ENCODE measurements at regions of chr3 and their contacts with region 1.

Region 1: DNA sequence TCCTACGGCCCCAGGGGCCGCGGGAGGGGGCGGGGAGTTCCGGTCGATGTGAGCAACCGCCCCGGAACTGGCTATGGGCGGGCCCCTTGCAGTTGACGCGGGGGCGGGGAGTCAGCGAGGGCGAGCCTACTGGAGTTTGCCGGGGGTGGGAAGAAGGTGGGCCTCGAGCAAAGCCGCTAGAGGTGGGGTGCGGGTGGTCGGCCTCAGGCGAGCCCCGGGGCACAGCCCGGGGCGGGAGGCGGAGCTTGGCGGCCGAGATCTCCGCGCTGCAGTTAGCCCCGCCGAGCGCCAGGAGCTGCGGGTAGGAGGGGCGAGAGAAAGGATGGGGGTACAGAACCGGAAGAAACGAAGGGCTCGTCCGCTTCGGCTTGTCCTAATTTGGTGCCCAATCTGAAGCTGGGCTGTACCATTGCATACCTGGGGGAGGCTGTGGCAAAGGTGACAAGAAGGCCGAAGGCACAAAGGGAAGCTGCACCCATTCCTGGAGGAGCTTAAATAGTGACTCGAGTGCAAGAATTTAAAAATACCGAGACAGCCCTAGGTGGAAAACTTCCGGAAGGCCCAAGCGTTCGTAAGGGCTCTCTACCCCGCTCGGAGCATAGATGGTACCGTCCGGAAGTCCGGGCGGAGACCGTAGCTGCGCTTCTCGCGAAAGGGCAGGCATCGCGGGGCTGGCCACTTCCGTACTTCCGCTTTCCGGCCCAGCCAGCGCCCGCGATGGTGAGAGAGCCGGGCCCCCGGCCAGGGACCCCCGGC is at the starts of genes ARPC4 and TADA3:
- DNase-seq: peak; percentile 82 to 96 (median 88)
- ATAC-seq: peak; percentile 85
- H3K4me3 ChIP-seq: peak within 1 kb of the TSS; percentile 99
- H3K4me3 Mint-ChIP-seq: peak within 1 kb of the TSS; percentile 99
- H3K27ac ChIP-seq: peak within 1 kb of the TSS; percentile 95 to 98
- H3K27ac Mint-ChIP-seq: peak within 1 kb of the TSS; percentile 99
- H3K4me1 ChIP-seq: peaks cover 64% of the 10 kb centered on the region
- H3K4me1 Mint-ChIP-seq: peaks cover 76% of the 10 kb centered on the region
- H3K27me3 ChIP-seq: no peaks in the 10 kb centered on the region
- H3K27me3 Mint-ChIP-seq: no peaks in the 10 kb centered on the region
- CTCF ChIP-seq: no peak
- total RNA-seq, gene ARPC4: 88.7 to 91.3 TPM
- total RNA-seq, gene TADA3: 14.7 to 16.5 TPM

Region 2: GRCh38 chr3:9749645-9750555 is 42.7 kb before region 1 on chr3 and contains the start of gene OGG1:
- CTCF ChIA-PET with region 1: interaction called, 5 read pairs
- POLR2A ChIA-PET with region 1: interaction called, 41 read pairs
- intact Hi-C with region 1: loop called (anchors 1 kb)
- DNase-seq: peak; percentile 84 to 98 (median 91)
- ATAC-seq: peak; percentile 94
- H3K4me3 ChIP-seq: peak within 1 kb of the TSS; percentile 82
- H3K4me3 Mint-ChIP-seq: peak within 1 kb of the TSS; percentile 95
- H3K27ac ChIP-seq: peak within 1 kb of the TSS; percentile 69 to 74
- H3K27ac Mint-ChIP-seq: peak within 1 kb of the TSS; percentile 85
- H3K4me1 ChIP-seq: peaks cover 37% of the 10 kb centered on the region
- H3K4me1 Mint-ChIP-seq: peaks cover 48% of the 10 kb centered on the region
- H3K27me3 ChIP-seq: no peaks in the 10 kb centered on the region
- H3K27me3 Mint-ChIP-seq: no peaks in the 10 kb centered on the region
- CTCF ChIP-seq: no peak
- total RNA-seq, gene OGG1: 7.1 to 8.9 TPM

Region 3: DNA sequence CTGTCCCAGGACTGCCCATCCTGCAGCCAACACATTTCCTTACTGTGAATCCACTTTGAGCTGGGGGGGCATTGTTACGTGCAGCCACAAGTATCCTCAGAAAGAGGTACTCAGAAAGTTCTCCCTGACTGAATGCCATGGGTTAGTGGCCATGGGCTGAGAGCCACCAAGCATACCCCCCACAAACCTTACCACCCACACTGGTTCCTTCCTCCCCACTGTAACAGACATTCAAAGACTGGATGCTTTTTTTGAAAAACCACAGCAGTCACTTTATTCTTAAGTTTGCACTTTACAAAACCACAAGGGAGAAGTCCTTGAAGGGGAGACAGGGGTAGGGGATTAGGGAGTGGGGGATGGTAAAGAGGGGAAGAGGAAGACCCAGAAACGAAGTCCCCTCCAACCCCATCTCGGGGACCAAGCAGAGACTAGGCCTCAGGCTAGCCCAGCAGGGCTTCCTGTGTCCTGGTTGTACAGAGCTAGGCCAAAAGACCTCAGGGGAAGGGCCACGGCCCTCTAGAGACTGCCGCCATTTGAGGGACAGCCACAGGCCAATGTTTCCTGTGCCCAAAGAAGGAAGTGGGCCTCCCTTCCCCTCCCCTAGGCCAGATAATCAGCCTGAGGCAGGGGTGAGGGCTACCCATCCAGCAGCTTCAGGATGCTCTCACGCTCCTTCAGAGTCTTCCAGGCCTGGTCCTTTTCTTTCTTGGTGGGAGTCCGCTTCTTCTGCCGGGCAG is 12.7 kb before region 1 on chr3:
- CTCF ChIA-PET with region 1: no interaction called
- POLR2A ChIA-PET with region 1: interaction called, 26 read pairs
- intact Hi-C with region 1: no loop called
- DNase-seq: peak in 5 of 14 experiments; percentile 30 to 61 (median 38)
- ATAC-seq: peak; percentile 71
- H3K4me3 ChIP-seq: peak overlapping the region; percentile 6
- H3K4me3 Mint-ChIP-seq: peak overlapping the region; percentile 38
- H3K27ac ChIP-seq: peak overlapping the region; percentile 42 to 49
- H3K27ac Mint-ChIP-seq: peak overlapping the region; percentile 65
- H3K4me1 ChIP-seq: peaks cover 50% of the 10 kb centered on the region
- H3K4me1 Mint-ChIP-seq: peaks cover 53% of the 10 kb centered on the region
- H3K27me3 ChIP-seq: no peaks in the 10 kb centered on the region
- H3K27me3 Mint-ChIP-seq: no peaks in the 10 kb centered on the region
- CTCF ChIP-seq: no peak

Region 4: DNA sequence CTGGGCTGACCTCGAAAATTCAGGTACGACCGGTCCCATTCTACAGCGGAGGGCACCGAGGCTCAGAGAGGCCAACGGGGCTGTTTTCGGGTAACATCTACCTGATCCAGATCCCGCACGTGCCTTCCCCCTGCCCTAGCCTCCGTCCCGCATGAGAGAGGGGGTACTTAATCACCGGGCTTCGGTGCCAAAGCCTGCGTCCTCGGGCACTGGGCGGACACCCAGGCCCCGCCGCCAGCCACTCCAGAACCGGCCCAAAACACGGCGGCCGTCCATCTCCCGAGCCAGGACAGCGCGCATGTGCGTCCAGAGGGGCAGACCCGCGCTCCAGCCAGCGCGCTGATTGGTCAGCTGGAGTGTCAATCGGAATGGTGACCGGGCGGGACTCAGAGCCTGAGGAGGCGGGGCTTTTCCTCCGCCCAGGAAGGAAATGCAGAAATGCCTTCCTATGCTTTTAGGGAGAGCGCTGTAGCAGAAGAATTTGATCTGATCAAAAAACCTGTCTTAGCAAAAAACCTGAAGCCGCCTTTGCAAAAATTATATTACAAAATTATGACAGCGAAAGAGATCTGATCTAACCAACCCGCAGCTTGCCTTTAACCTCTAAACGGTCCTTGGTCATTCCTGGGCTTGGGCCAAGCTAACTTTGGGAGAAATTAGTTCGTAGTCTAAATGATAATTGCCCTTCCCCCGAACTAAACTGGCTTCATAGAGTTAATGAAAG is 51.3 kb after region 1 on chr3 and contains the start of gene RPUSD3:
- CTCF ChIA-PET with region 1: no interaction called
- POLR2A ChIA-PET with region 1: interaction called, 4 read pairs
- intact Hi-C with region 1: loop called in 1 of 2 experiments (anchors 5 kb)
- DNase-seq: peak; percentile 93 to 98 (median 96)
- ATAC-seq: peak; percentile 98
- H3K4me3 ChIP-seq: peak within 1 kb of the TSS; percentile 73
- H3K4me3 Mint-ChIP-seq: peak within 1 kb of the TSS; percentile 98
- H3K27ac ChIP-seq: peak within 1 kb of the TSS; percentile 21 to 38
- H3K27ac Mint-ChIP-seq: peak within 1 kb of the TSS; percentile 80
- H3K4me1 ChIP-seq: peaks cover 28% of the 10 kb centered on the region
- H3K4me1 Mint-ChIP-seq: peaks cover 28% of the 10 kb centered on the region
- H3K27me3 ChIP-seq: no peaks in the 10 kb centered on the region
- H3K27me3 Mint-ChIP-seq: no peaks in the 10 kb centered on the region
- CTCF ChIP-seq: no peak
- total RNA-seq, gene RPUSD3: 7.9 to 8.1 TPM